Breast epithelium (tissue), 4 donors: ENCODE measurements at regions of chrX and their contacts with region 1.

Region 1: DNA sequence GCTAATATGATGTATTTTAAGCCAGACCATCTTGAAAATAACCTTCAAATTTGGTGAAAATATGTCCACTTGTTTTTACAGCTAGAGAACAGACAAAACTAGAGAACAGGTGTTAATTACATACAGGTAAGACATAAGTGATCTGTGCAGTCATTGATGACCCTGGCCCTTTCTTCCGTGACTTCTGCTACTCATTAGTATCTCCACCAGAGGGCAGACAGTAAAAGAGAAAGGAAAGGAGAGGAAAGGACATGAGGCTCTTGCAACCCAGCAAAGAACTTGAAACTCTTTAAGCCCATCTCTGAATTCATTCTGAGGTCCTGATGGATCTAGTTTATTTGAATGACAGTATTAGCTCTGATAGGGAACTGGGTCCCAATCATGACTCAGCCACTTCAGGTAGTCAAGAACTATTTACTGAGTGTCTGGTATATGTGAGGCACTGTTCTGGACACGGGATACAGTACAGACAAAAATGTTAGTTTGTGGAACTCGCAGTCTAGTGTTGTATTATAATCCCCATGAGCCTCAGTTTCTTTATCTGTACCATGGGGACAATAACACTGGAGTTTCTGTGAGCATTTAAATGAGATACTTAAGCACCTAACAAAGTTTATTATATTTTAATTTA is 121.0 kb upstream of the TEX13D start:
- DNase-seq: no peak
- H3K4me3 ChIP-seq: no peak overlapping the region
- H3K27ac ChIP-seq: no peak overlapping the region
- H3K4me1 ChIP-seq: no peaks in the 10 kb centered on the region
- H3K27me3 ChIP-seq: no peaks in the 10 kb centered on the region
- CTCF ChIP-seq: peak in 1 of 3 donors; percentile 1
- POLR2A ChIP-seq: no peak

Region 2: DNA sequence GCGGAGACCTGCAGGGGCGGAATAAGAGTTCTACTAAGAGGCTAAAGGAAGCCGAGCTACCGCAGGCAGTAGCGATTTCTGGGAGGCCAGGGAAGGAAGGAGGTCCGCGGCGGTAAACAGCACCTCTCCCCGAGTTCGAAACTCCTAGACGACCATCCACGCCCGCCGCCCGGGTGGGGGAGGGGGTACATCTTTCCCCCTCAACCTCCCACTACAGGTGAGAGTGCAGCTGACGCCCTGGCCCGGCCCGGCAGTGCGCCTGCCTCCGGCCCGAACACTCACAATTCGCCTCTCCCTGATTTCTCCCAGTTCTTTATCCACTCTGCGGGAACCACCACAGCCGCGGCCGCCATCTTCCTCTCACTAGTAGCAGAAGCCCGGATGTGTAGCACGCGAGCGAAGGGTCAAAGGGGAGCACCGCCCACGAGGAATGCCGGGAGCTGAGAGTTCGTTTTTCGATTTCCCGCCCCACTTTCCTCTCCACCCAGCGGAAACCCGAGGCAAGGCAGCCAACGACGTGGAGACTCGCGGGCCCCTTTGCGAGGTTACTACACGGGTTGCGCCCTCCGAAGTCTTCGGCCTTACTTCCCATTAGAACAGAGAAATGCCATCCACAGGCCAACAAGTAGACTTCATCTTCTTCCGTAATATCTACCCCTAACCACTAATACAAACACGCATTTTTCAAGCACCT is 478.6 kb before region 1 on chrX and contains the start of gene THOC2:
- intact Hi-C with region 1: no loop called
- DNase-seq: peak; percentile 77 to 78
- H3K4me3 ChIP-seq: peak within 1 kb of the TSS; percentile 78 to 81 (median 80)
- H3K27ac ChIP-seq: peak within 1 kb of the TSS; percentile 84 to 92
- H3K4me1 ChIP-seq: no peaks in the 10 kb centered on the region
- H3K27me3 ChIP-seq: no peaks in the 10 kb centered on the region
- CTCF ChIP-seq: peak in 2 of 3 donors; percentile 45 to 48
- POLR2A ChIP-seq: no peak
- total RNA-seq, gene THOC2: 72.8 to 169 (median 119) TPM

Region 3: GRCh38 chrX:124151195-124151594 is 60.2 kb before region 1 on chrX:
- intact Hi-C with region 1: loop called (anchors 2 kb)
- DNase-seq: no peak
- H3K4me3 ChIP-seq: no peak overlapping the region
- H3K27ac ChIP-seq: no peak overlapping the region
- H3K4me1 ChIP-seq: no peaks in the 10 kb centered on the region
- H3K27me3 ChIP-seq: no peaks in the 10 kb centered on the region
- CTCF ChIP-seq: no peak
- POLR2A ChIP-seq: no peak